BJ (cell line): ENCODE measurements at regions of chr11 and their contacts with region 1.

Region 1: GRCh38 chr11:69683764-69684333 is 8.7 kb upstream of the LTO1 start:
- DNase-seq: no peak
- H3K4me3 ChIP-seq: no peak overlapping the region
- H3K27me3 ChIP-seq: no peaks in the 10 kb centered on the region
- CTCF ChIP-seq: peak; percentile 40

Region 2: DNA sequence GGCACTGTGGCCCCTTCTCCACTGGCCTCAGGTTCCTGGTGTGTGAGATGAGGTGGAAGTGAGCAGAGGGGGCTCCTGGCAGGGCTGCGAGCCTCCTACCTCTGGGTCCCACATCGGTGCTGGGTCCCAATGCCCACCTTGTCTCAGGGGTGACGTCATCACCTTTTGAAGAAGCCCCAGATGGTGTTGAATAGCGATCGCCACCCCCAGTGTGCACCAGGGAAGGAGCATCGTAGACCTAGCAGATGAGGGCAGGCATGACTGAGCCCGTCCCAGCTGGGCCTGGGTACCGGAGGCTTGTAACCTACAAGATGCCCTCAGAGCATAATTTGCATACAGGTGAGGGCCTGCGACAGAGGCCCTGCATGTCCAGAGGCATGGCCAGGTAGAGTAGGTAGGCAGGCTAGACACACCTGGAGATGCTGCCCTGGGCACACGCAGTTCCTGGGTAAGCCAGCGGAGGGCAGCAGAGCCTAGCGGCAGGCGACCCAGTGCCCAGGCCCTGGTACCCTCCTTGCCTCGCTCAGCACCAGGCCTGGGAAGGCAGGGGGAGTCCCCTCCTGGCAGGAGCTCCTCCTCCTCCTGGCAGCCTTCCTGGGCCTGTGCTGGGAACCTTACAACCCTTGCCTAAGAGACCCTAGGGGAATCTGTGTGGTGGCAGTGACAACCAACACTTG is 582.6 kb before region 1 on chr11:
- CTCF ChIA-PET with region 1: interaction called, 12 read pairs
- POLR2A ChIA-PET with region 1: no interaction called
- DNase-seq: no peak
- H3K4me3 ChIP-seq: no peak overlapping the region
- H3K27me3 ChIP-seq: no peaks in the 10 kb centered on the region
- CTCF ChIP-seq: peak; percentile 100

Region 3: DNA sequence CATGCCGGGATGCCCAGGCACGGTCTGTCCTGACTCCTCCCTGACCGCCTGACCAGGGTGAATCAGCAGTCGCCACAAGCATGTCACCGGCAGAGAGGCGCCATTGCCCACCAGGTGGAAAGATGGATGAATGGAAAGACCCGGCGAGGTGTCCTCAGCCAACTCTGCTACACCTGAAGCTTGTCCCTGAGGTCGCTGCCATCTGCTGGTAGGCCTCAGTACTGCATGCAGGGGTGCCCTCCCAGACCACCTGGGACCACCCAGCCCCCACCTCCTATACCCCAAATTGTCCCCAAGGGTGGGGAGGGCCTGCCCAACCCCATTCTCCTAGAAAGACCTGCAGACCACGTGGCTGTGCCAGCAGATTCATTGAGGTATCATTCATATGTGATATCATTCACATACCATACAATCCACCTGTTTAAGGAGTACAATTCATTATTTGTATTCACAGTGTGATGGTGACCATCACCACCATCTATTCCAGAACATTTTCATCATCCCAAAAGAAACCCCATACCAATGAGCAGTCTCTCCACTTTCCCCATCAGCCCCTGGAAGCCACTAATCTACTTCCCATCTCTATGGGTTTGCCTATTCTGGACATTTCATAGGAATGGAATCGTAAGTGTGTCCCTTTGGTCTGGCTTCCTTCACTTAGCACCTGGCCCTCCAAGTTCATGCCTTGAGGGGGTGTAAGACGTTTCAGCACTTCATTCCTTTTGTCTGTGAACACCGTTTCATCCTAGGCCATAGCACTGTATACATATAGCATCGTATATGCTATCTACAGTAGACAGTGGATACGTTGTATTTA is 117.9 kb after region 1 on chr11:
- CTCF ChIA-PET with region 1: interaction called, 14 read pairs
- POLR2A ChIA-PET with region 1: no interaction called
- DNase-seq: no peak
- H3K4me3 ChIP-seq: no peak overlapping the region
- H3K27me3 ChIP-seq: no peaks in the 10 kb centered on the region
- CTCF ChIP-seq: peak; percentile 86

Region 4: GRCh38 chr11:69888483-69889076 is 204.7 kb after region 1 on chr11:
- CTCF ChIA-PET with region 1: interaction called, 29 read pairs
- POLR2A ChIA-PET with region 1: no interaction called
- DNase-seq: no peak
- H3K4me3 ChIP-seq: no peak overlapping the region
- H3K27me3 ChIP-seq: peaks cover 6% of the 10 kb centered on the region
- CTCF ChIP-seq: peak; percentile 94

Region 5: DNA sequence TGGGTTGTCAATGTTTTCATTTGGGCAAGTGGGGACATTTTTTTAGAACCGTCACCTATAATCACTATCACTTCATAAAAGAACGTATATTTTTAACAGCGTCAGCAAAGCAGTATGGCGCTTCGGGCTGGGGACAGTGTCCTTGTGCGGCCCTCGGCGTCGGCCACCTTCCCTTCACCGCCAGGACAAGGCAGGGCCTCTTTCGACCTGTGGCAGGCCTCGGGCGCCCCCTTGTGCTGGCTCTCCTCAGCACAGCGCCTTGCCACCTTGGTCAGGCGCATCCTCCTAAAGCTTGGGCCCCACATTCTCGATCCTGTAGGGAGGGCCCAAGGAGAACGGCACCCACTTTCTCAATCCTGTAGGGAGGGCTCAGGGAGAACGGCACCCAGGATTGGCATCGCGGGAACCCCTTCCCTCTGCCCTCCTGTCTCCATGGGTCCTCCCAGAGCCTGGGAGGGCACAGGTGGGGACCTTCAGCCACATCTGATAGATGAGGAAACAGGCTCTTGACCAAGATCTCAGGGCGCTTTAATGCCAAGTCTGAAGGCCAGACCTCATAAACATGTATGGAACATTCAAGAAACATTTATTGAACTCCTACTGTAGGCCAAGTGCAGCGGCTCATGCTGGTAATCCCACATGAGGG is 507.8 kb after region 1 on chr11:
- CTCF ChIA-PET with region 1: interaction called, 15 read pairs
- POLR2A ChIA-PET with region 1: no interaction called
- DNase-seq: no peak
- H3K4me3 ChIP-seq: no peak overlapping the region
- H3K27me3 ChIP-seq: no peaks in the 10 kb centered on the region
- CTCF ChIP-seq: peak; percentile 94